ENCODE measurements at regions of chr6 and their contacts with region 1.

Region 1: GRCh38 chr6:24696097-24696496 is 22.9 kb downstream of the C6orf62 start:
- DNase-seq: no peak
- H3K4me3 ChIP-seq: no peak overlapping the region
- H3K27ac ChIP-seq: no peak overlapping the region
- H3K4me1 ChIP-seq: peaks cover 7% of the 10 kb centered on the region
- CTCF ChIP-seq: no peak

Region 2: DNA sequence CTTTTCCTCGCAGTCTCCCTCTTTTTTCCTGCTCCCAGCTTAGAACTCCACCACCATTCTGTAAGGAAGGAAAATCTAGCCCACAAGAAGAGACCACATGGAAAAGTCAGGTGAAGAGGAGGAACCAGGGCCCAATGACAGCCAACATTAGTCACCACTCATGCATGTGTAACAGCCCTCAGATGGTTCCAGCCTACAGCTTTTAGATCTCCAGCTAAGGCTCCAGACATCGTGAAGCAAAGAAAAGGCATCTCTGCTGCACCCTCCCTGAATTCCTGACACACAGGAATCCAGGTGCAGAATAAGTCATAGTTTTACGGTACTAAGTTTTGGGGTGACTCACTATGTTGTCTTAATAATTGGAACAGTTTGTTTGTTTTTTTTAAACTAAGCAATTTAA is 363.8 kb before region 1 on chr6:
- CTCF ChIA-PET with region 1: no interaction called
- POLR2A ChIA-PET with region 1: no interaction called
- intact Hi-C with region 1: no loop called
- DNase-seq: no peak
- H3K4me3 ChIP-seq: no peak overlapping the region
- H3K27ac ChIP-seq: no peak overlapping the region
- H3K4me1 ChIP-seq: no peaks in the 10 kb centered on the region
- CTCF ChIP-seq: no peak

Region 3: DNA sequence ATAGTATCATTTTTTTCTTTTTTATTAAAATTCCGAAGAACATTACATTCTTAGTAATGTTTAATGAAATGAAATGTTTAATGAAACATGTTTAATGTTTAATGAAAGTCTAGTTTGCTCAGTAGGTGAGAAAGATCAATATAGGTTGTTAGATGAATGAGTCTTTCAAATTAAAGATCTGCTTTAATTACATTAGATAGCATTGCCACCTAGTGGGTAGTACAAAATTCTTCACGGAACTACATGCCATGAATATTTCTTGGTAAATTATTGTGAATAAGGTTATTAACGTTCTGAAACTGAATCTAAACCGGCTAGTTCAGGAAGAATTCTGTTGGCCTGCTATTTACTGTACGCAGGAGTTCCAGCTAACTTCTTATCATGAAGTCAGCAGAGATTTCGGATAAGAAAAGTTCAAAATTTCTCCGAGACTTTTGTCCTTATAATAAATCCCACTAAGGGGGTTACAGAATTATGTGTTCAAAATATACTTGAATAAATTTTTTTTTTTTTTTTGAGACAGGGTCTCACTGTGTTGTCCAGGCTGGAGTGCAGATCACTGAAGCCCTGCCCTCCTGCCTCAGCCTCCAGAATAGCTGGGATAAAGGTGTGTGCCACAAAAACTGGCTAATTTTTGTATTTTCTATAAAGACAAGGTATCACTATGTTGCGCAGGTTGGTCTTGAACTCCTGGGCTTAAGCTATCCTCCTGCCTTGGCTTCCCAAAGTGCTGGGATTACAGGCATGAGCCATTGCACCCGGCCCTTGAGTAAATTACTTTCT is 70.8 kb after region 1 on chr6:
- CTCF ChIA-PET with region 1: no interaction called
- POLR2A ChIA-PET with region 1: no interaction called
- intact Hi-C with region 1: loop called (anchors 1 kb)
- DNase-seq: peak; percentile 64
- H3K4me3 ChIP-seq: no peak overlapping the region
- H3K27ac ChIP-seq: no peak overlapping the region
- H3K4me1 ChIP-seq: peaks cover 4% of the 10 kb centered on the region
- CTCF ChIP-seq: peak; percentile 91

Measured in OCI-LY7 (cell line).